MCF 10A (cell line): ENCODE measurements at regions of chr22 and their contacts with region 1.

Region 1: DNA sequence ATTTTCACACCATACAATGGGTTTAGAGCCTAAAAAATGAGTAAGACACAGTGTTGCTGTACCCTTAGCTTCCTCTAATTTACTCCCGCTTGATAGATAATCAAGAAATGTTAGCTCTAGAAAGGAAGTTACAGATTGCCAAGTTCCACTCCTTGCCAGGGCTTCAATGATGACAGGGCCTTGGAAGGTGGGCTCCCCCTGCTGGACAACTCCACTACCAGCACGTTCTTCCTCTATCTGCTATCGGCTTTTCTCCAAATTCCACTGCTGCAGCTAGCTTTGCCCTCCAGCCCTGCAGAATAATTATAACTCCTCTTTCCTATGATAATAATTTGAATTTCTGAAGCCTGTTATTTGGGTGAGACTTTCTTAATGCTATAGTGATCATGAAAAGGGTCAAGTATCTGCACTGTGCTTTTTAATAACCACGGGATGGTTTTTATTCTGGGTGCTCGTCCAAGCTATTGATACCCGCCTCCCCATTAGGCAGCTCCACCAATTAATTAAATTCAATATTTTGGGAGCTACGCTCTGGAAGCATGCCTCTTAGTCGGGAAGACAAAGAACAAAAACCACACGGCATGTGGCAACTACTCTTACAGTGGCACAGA is 9.0 kb downstream of the SYN3 start:
- DNase-seq: peak; percentile 75
- H3K4me3 Mint-ChIP-seq: no peak overlapping the region
- H3K27ac Mint-ChIP-seq: no peak overlapping the region
- H3K4me1 Mint-ChIP-seq: no peaks in the 10 kb centered on the region
- H3K27me3 Mint-ChIP-seq: peaks cover 24% of the 10 kb centered on the region
- CTCF ChIP-seq: peak; percentile 89

Region 2: GRCh38 chr22:32528984-32529982 is 519.9 kb before region 1 on chr22:
- CTCF ChIA-PET with region 1: interaction called, 24 read pairs
- POLR2A ChIA-PET with region 1: no interaction called
- intact Hi-C with region 1: no loop called
- DNase-seq: peak; percentile 76
- H3K4me3 Mint-ChIP-seq: no peak overlapping the region
- H3K27ac Mint-ChIP-seq: no peak overlapping the region
- H3K4me1 Mint-ChIP-seq: peaks cover 26% of the 10 kb centered on the region
- H3K27me3 Mint-ChIP-seq: no peaks in the 10 kb centered on the region
- CTCF ChIP-seq: peak; percentile 85

Region 3: DNA sequence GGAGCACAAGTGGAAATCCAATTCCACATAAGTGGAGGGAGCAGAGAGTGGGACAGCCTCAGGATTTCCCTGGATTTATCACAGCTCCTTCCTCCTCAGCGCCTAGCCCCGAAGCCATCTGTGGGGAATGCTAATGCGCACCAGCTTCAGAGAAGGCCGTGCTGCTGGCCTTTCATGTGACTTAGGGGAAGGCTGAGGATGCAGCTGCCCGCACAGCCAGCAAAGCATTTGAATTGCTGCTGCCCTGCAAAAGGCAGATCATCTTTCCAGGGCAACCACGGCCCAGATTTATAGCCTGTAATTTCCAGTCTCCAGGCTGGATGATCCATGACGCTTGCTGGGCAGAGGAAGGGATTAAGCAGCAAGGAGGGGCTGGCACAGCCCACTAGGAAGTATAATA is 21.0 kb before region 1 on chr22:
- CTCF ChIA-PET with region 1: interaction called, 19 read pairs
- POLR2A ChIA-PET with region 1: interaction called, 3 read pairs
- intact Hi-C with region 1: no loop called
- DNase-seq: no peak
- H3K4me3 Mint-ChIP-seq: no peak overlapping the region
- H3K27ac Mint-ChIP-seq: no peak overlapping the region
- H3K4me1 Mint-ChIP-seq: peaks cover 5% of the 10 kb centered on the region
- H3K27me3 Mint-ChIP-seq: no peaks in the 10 kb centered on the region
- CTCF ChIP-seq: no peak

Region 4: DNA sequence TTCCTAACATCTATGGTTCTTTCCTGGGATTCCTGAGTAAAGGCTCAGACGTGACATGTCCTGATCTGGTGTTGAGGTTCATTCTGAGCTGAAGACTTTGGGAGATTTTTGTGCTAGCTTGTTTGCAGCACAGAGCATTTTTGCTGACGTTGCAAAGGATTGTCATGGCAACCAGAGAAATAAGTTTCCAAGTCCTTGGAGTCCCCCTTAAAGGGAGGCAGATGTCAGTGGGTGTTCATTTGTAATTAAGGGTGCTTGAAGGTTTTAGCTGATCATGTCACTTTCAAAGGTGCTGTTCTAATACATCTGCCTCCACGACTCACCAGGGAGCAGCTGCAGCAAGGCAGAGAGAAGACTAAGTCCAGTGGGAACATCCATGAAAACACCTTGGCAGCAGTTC is 14.4 kb after region 1 on chr22:
- CTCF ChIA-PET with region 1: interaction called, 36 read pairs
- POLR2A ChIA-PET with region 1: interaction called, 3 read pairs
- intact Hi-C with region 1: no loop called
- DNase-seq: no peak
- H3K4me3 Mint-ChIP-seq: no peak overlapping the region
- H3K27ac Mint-ChIP-seq: no peak overlapping the region
- H3K4me1 Mint-ChIP-seq: no peaks in the 10 kb centered on the region
- H3K27me3 Mint-ChIP-seq: peaks cover 11% of the 10 kb centered on the region
- CTCF ChIP-seq: no peak

Region 5: DNA sequence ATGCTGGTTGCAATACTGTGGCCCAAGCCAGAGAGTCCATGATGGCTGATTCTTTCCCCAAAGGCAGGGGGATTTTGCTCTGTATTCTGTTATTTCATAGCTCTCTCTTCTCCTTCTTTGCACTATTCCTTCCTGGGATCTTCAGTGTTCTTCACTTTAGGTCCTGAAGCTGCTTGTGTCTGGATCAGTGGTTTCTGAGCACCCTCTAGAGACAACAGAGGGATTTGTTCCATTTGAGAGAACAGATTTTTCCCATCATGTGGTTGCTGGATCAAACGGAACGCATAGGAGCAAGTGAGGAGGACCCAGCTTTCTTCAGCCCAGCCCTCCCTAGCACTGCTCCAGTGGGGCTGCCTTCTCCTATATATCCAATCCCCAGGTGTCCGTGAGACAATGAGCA is 77.7 kb after region 1 on chr22:
- CTCF ChIA-PET with region 1: interaction called, 8 read pairs
- POLR2A ChIA-PET with region 1: no interaction called
- intact Hi-C with region 1: loop called (anchors 2 kb)
- DNase-seq: peak; percentile 50
- H3K4me3 Mint-ChIP-seq: no peak overlapping the region
- H3K27ac Mint-ChIP-seq: no peak overlapping the region
- H3K4me1 Mint-ChIP-seq: peaks cover 5% of the 10 kb centered on the region
- H3K27me3 Mint-ChIP-seq: no peaks in the 10 kb centered on the region
- CTCF ChIP-seq: peak; percentile 61

Region 6: DNA sequence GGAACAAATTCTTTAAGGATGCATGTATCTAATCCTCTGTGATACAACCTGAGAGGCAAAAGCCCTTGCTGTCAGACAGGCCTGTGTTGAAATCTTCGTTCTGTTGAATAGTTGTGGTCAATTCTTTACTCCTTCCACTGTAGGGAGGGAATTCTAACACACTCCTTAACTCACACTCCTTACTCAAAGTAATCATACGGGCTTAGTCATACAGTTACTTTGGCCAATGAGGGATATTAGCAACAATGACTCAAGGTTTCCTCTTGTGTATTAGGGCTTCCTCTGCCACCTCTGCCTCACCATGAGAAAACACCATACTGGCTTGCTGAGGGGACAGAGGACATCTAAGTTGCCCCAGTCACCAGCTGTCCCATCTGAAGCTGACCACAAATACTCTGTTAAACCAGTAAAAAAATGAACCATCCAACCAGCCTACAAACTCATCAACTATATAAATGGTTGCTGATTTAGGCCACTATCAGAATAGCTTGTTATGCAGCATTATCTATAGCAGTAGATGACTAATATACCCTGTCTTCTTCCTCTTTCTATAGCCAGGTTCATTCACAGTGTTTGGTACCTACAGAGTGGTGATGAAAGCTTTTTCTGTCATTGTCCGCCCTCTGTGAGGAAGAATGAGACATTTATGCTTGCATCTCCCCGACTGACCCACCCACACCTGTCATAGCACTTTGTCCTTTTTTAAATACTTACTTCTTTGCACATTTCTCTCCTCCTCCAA is 331.7 kb after region 1 on chr22:
- CTCF ChIA-PET with region 1: no interaction called
- POLR2A ChIA-PET with region 1: no interaction called
- intact Hi-C with region 1: no loop called
- DNase-seq: peak; percentile 1
- H3K4me3 Mint-ChIP-seq: no peak overlapping the region
- H3K27ac Mint-ChIP-seq: no peak overlapping the region
- H3K4me1 Mint-ChIP-seq: peaks cover 13% of the 10 kb centered on the region
- H3K27me3 Mint-ChIP-seq: no peaks in the 10 kb centered on the region
- CTCF ChIP-seq: no peak